ENCODE measurements at regions of chrX and their contacts with region 1.

Region 1: GRCh38 chrX:48574270-48575266 is at the start of gene RBM3:
- DNase-seq: peak; percentile 64 to 96 (median 92)
- ATAC-seq: peak; percentile 94
- H3K4me3 ChIP-seq: peak within 1 kb of the TSS; percentile 68
- H3K4me3 Mint-ChIP-seq: peak within 1 kb of the TSS; percentile 88 to 100 (median 97)
- H3K27ac ChIP-seq: peak within 1 kb of the TSS; percentile 99
- H3K27ac Mint-ChIP-seq: peak within 1 kb of the TSS; percentile 95 to 100 (median 99)
- H3K4me1 ChIP-seq: peaks cover 16 to 20% of the 10 kb centered on the region in 2 donors
- H3K4me1 Mint-ChIP-seq: peaks cover 6 to 32% (median 25%) of the 10 kb centered on the region in 7 donors
- H3K27me3 ChIP-seq: no peaks in the 10 kb centered on the region
- H3K27me3 Mint-ChIP-seq: no peaks in the 10 kb centered on the region
- total RNA-seq, gene RBM3: 176 to 374 (median 329) TPM

Region 2: DNA sequence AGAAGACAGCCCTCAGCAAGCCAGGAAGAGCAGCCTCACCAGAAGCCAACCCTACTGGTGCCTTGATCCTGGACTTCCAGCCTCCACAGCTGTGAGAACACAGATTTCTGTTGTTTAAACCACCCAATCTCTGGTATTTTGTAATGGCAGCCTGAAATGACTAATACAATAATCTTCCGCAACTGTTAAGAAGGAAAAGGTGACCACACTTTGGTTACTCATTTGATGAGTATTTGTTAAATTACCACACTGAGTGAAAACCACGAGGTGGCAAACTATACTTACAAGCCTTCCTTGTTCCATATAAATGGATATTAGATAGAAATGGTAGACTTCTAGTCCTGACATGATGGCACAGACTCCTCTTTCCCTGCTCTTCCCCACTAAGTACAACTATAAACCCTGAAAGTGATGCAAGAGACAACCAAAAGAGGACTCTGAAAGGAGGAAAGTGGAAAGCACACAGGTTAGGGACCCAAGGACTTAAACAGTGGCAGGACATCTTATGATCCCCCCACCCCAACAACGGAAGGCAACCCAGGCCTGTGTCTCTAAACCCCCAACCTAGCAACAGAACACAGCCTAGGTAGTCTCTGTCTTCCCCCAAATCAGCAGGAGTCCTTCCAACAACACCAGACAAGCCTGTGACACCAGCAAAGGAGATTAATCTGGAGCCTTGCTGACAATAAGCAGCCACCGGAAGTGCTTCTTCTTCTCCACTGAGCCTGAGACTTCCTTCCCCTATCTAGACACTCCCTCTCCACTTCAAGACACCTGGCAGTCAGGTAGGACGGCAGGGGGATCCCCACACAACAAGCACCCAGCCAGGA is 583.1 kb before region 1 on chrX:
- CTCF ChIA-PET with region 1: no interaction called
- POLR2A ChIA-PET with region 1: no interaction called
- intact Hi-C with region 1: no loop called
- DNase-seq: peak in 7 of 9 donors; percentile 7 to 34 (median 25)
- ATAC-seq: peak; percentile 63
- H3K4me3 ChIP-seq: no peak overlapping the region
- H3K4me3 Mint-ChIP-seq: peak overlapping the region in 9 of 10 donors; percentile 16 to 73 (median 56)
- H3K27ac ChIP-seq: no peak overlapping the region
- H3K27ac Mint-ChIP-seq: peak overlapping the region; percentile 52 to 92 (median 77)
- H3K4me1 ChIP-seq: peaks cover 6 to 15% of the 10 kb centered on the region in 2 donors
- H3K4me1 Mint-ChIP-seq: peaks cover 18 to 47% (median 40%) of the 10 kb centered on the region in 7 donors
- H3K27me3 ChIP-seq: no peaks in the 10 kb centered on the region
- H3K27me3 Mint-ChIP-seq: no peaks in the 10 kb centered on the region

Region 3: GRCh38 chrX:48071064-48071985 is 503.2 kb before region 1 on chrX and contains the start of gene ZNF630:
- CTCF ChIA-PET with region 1: interaction called, 3 read pairs
- POLR2A ChIA-PET with region 1: interaction called, 3 read pairs
- intact Hi-C with region 1: loop called in 1 of 2 experiments (anchors 1 kb)
- DNase-seq: peak; percentile 13 to 49 (median 35)
- ATAC-seq: peak; percentile 86
- H3K4me3 ChIP-seq: peak within 1 kb of the TSS; percentile 79
- H3K4me3 Mint-ChIP-seq: peak within 1 kb of the TSS; percentile 89 to 95 (median 92)
- H3K27ac ChIP-seq: peak within 1 kb of the TSS; percentile 80
- H3K27ac Mint-ChIP-seq: peak within 1 kb of the TSS; percentile 87 to 97 (median 94)
- H3K4me1 ChIP-seq: peaks cover 0 to 4% of the 10 kb centered on the region in 2 donors
- H3K4me1 Mint-ChIP-seq: peaks cover 0 to 26% (median 15%) of the 10 kb centered on the region in 7 donors
- H3K27me3 ChIP-seq: no peaks in the 10 kb centered on the region
- H3K27me3 Mint-ChIP-seq: no peaks in the 10 kb centered on the region
- total RNA-seq, gene ZNF630: 0.53 to 5.1 (median 2.2) TPM

Region 4: DNA sequence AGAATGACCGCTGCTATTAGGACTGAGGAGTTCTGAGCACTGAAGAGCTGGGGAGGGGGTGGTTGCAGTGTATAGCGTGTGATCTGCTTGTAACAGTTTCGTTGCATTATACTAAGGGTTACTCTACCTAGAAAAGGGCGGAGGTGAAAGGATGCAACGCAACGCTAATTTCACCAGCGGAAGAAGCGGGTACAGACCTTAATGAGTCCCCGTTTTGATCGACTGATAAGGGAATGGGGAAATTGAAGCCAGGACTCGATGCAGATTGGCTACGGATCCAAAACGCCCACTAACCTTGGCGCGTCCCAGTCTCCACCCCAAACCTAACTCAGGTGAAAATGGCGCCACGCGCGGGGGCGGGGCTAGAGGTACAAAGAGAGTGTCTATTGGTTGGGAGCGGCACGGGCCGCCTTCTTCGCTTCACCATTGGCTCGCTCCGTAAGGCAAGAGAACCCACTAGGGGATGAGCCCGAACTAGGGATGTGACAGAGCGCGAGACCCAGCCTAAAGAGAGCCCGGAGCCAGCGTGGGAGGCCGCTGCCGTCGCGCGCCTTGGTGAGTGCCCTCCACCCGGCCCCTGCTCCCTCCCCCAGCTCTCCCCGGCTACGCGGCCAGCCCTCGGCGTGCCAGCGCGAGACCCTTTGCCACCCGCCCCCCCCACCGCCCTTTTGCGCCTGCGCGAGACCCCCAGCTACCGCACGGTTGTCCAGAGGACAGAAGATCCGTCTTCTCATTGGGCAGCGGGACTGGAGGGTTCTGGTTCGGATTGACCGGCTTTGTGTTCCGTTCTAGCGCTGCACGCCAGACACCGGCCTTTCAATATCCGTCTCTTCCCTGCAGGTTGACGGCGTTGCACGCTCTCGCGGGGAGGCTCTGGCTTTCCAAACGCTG is 53.0 kb before region 1 on chrX and contains the start of gene EBP:
- CTCF ChIA-PET with region 1: no interaction called
- POLR2A ChIA-PET with region 1: interaction called, 4 read pairs
- intact Hi-C with region 1: loop called (anchors 1 kb)
- DNase-seq: peak; percentile 82 to 96 (median 94)
- ATAC-seq: peak; percentile 98
- H3K4me3 ChIP-seq: peak within 1 kb of the TSS; percentile 78
- H3K4me3 Mint-ChIP-seq: peak within 1 kb of the TSS; percentile 73 to 93 (median 89)
- H3K27ac ChIP-seq: peak within 1 kb of the TSS; percentile 82
- H3K27ac Mint-ChIP-seq: peak within 1 kb of the TSS; percentile 90 to 99 (median 94)
- H3K4me1 ChIP-seq: peaks cover 12 to 19% of the 10 kb centered on the region in 2 donors
- H3K4me1 Mint-ChIP-seq: peaks cover 14 to 39% (median 34%) of the 10 kb centered on the region in 7 donors
- H3K27me3 ChIP-seq: no peaks in the 10 kb centered on the region
- H3K27me3 Mint-ChIP-seq: no peaks in the 10 kb centered on the region
- total RNA-seq, gene EBP: 33.3 to 188 (median 35.3) TPM

Region 5: GRCh38 chrX:49147936-49148335 is 573.4 kb after region 1 on chrX:
- CTCF ChIA-PET with region 1: no interaction called
- POLR2A ChIA-PET with region 1: no interaction called
- intact Hi-C with region 1: no loop called
- DNase-seq: no peak
- ATAC-seq: no peak
- H3K4me3 ChIP-seq: no peak overlapping the region
- H3K4me3 Mint-ChIP-seq: no peak overlapping the region
- H3K27ac ChIP-seq: no peak overlapping the region
- H3K27ac Mint-ChIP-seq: no peak overlapping the region
- H3K4me1 ChIP-seq: no peaks in the 10 kb centered on the region
- H3K4me1 Mint-ChIP-seq: peaks cover 0 to 5% (median 0%) of the 10 kb centered on the region in 7 donors
- H3K27me3 ChIP-seq: no peaks in the 10 kb centered on the region
- H3K27me3 Mint-ChIP-seq: no peaks in the 10 kb centered on the region

Measured in naive thymus-derived CD4-positive, alpha-beta T cell (primary cell).